ENCODE measurements at regions of chr3 and their contacts with region 1.

Region 1: DNA sequence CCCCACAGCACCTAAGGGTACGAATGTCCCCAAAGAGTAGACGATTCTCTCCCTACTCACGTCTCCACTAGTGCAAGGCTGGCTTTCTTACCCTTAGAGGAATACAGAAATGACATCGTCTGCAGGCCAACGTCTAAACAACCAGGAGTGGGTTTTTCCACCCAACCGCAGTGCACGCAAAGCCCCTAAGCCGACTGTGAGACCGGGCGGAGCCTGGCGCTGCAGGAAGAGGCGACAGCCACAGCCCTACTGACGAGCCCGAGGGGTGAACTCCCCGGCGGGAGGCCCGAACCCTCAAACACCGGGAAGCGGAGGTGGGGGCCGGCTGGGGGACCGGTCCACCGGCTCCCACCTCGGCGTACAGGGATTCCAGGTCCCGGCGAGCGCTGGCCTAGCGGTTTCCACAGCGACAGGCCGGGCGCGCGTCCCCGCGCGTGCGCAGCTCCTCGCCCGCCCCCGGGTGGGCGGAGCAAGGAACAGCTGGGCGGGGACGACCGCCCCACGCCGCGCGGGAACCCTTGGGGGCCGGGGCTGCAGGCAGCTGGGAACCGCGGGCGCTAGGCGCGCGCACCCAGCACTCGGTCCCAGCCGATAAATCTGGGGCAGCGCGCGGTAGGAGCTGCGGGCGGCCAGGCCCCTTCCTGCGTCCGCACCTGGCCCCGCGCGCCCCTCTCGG is at the starts of genes CEP19 and PIGX:
- DNase-seq: peak; percentile 94
- H3K4me3 Mint-ChIP-seq: peak within 1 kb of the TSS; percentile 83
- H3K27ac Mint-ChIP-seq: peak within 1 kb of the TSS; percentile 92
- H3K4me1 Mint-ChIP-seq: peaks cover 34% of the 10 kb centered on the region
- H3K27me3 Mint-ChIP-seq: no peaks in the 10 kb centered on the region
- total RNA-seq, gene CEP19: 3.1 to 4.4 TPM
- total RNA-seq, gene PIGX: 30.7 to 32.8 TPM

Region 2: DNA sequence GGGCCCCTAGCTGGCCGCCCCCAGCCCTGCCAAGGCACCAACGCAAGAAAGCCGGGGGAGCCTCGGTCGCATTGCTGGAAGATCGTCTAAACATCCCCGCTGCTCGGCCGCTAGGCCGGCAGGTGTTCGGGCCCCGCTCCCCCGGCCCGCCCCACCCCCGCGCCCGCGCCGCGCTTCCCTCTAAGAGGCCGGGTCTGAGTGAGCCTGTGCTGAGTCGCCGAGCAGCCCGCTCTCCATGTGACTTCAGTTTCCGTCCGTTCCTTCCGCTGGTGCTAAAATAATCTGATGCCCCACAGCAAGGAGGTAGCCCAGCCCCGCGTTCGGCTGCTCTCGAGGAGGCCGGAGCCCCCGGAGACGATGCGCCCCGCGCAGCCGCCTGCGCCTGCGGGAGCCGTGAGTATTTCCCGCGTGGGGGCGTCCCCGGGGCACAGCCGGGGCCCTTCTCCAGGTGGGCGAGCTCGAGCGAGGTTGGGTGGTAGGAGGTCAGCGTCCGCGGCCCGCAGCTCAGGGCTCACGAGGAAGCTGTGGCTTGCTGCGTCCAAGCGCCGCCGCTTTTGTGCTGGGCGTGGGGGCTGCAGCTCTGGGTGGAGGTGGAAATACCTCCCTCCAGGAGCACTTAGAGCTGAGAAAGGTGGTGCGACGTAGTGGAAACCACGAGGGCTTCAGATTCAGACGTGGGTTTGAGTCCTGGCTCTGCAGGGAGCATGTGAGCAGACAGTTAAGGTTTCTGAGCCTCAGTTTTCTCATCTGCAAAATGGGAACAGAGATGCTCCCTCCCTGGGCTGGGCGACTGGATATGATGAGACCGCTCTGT is 72.3 kb before region 1 on chr3 and contains the start of gene NRROS:
- CTCF ChIA-PET with region 1: no interaction called
- intact Hi-C with region 1: loop called (anchors 1 kb)
- DNase-seq: peak; percentile 77
- H3K4me3 Mint-ChIP-seq: peak within 1 kb of the TSS; percentile 80
- H3K27ac Mint-ChIP-seq: peak within 1 kb of the TSS; percentile 82
- H3K4me1 Mint-ChIP-seq: peaks cover 45% of the 10 kb centered on the region
- H3K27me3 Mint-ChIP-seq: no peaks in the 10 kb centered on the region
- total RNA-seq, gene NRROS: 8.1 to 9.2 TPM

Region 3: GRCh38 chr3:196821806-196822355 is 109.9 kb after region 1 on chr3:
- CTCF ChIA-PET with region 1: no interaction called
- intact Hi-C with region 1: no loop called
- DNase-seq: no peak
- H3K4me3 Mint-ChIP-seq: no peak overlapping the region
- H3K27ac Mint-ChIP-seq: no peak overlapping the region
- H3K4me1 Mint-ChIP-seq: no peaks in the 10 kb centered on the region
- H3K27me3 Mint-ChIP-seq: no peaks in the 10 kb centered on the region

Region 4: DNA sequence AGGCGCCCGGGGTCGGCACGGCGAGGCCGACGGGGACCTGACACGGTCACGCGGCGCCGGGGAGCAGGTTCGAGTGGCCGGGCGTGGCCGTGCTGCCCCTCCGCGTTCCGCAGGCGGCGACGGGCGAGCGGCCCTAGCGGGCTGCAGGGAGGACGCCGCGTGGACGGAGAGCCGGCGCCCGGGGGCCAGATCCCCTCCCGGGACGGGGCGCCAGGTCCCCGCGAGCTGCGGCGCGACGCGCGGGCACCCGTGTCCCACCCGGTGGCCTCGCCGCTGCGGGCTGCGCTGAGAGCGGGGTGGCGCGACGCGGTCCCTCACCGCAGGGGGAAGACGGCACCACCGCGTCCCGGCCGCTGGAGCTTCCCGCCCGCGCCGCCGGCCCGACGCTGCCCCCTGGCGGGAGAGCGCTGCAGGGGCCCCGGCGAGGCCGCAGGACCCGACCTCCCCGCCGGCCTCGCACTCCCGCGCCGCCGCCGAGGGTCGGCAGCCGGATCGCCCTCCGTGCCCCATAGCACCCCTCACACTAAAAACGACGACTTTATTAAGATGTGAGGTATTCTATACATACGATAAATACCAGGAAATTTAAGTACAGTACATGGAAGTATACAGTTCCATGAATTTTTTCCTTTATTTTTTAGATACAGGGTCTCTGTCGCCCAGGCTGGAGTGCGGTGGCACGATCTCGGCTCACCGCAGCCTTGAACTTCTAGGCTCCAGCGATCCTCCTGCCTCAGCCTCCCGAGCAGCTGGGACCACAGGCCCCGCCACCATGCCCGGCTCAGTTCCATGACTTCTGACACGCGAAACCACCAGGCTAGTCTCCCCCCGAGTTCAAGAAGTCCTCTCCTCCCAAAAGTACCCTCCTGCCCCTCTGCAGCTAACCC is 257.9 kb after region 1 on chr3:
- CTCF ChIA-PET with region 1: no interaction called
- intact Hi-C with region 1: loop called (anchors 2 kb)
- DNase-seq: peak; percentile 68
- H3K4me3 Mint-ChIP-seq: peak overlapping the region; percentile 70
- H3K27ac Mint-ChIP-seq: no peak overlapping the region
- H3K4me1 Mint-ChIP-seq: peaks cover 7% of the 10 kb centered on the region
- H3K27me3 Mint-ChIP-seq: peaks cover 22% of the 10 kb centered on the region